ENCODE measurements at regions of chr6 and their contacts with region 1.

Region 1: GRCh38 chr6:152316024-152316423 is 321.1 kb downstream of the SYNE1 start:
- DNase-seq: no peak
- H3K4me3 ChIP-seq: no peak overlapping the region
- H3K27ac ChIP-seq: peak overlapping the region in 1 of 2 experiments; percentile 95; a peak in 3 of 4 replicates
- H3K4me1 ChIP-seq: peaks cover 0 to 19% of the 10 kb centered on the region in 2 experiments; a peak in 1 of 4 replicates
- H3K27me3 ChIP-seq: no peaks in the 10 kb centered on the region
- CTCF ChIP-seq: no peak
- EP300 ChIP-seq: no peak
- RAD21 ChIP-seq: no peak

Region 2: DNA sequence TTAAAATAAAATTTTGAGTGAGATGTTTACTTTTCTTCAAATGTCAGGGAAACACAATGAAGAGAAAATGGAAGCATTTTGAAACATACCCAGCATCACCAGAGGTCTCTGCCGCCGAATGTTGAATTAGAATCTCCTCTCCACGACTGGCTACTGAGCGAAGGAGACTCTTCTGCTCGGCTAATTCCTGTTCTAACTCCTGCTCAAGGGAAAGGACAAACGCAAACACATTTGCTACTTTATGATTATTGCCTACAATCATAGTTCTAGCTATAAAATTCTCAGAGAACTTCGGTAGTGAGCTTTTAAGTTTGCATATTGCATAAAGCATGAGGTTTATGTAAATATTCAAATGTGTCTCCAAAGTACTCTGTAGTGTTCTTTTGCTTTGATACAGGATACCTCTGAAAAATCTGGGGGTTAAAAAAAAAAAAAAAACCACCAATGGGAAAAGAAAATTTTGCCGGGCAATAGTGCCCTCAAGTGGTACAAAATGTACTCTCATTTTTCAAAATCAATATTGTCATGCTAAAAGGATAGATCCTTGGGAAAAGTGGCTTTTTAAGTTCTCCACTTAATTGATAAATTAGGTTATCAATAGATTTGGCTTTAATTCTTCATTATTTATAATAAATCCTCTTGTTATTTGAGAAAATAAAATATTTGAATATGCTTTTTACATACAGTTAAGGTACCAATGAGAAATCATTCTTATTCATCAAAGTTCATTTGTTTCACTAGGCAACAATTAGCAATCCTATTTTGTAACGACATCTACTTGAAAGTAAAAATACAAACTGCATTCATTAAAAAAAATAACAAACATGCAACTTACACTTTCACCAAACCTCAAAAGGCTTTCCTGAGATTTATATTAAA is 47.8 kb before region 1 on chr6:
- CTCF ChIA-PET with region 1: no interaction called
- POLR2A ChIA-PET with region 1: no interaction called
- DNase-seq: peak; percentile 43
- H3K4me3 ChIP-seq: peak overlapping the region in 1 of 2 experiments; percentile 44; a peak in 1 of 4 replicates
- H3K27ac ChIP-seq: no peak overlapping the region
- H3K4me1 ChIP-seq: peaks cover 0 to 13% of the 10 kb centered on the region in 2 experiments; a peak in 1 of 4 replicates
- H3K27me3 ChIP-seq: no peaks in the 10 kb centered on the region
- CTCF ChIP-seq: peak; percentile 72
- EP300 ChIP-seq: no peak
- RAD21 ChIP-seq: peak; percentile 77

Region 3: GRCh38 chr6:152301764-152302568 is 14.1 kb before region 1 on chr6:
- CTCF ChIA-PET with region 1: interaction called, 12 read pairs
- POLR2A ChIA-PET with region 1: no interaction called
- DNase-seq: peak; percentile 84
- H3K4me3 ChIP-seq: peak overlapping the region; percentile 72 to 79
- H3K27ac ChIP-seq: peak overlapping the region; percentile 81 to 97
- H3K4me1 ChIP-seq: peaks cover 3 to 11% of the 10 kb centered on the region in 2 experiments; a peak in 3 of 4 replicates
- H3K27me3 ChIP-seq: no peaks in the 10 kb centered on the region
- CTCF ChIP-seq: peak; percentile 56
- EP300 ChIP-seq: 0 out of 4 replicates have a peak, but pooled peaks of 1 of the 2 experiments have one; percentile 4
- RAD21 ChIP-seq: peak; percentile 46

Region 4: GRCh38 chr6:152329638-152330448 is 13.8 kb after region 1 on chr6:
- CTCF ChIA-PET with region 1: no interaction called
- POLR2A ChIA-PET with region 1: no interaction called
- DNase-seq: no peak
- H3K4me3 ChIP-seq: no peak overlapping the region
- H3K27ac ChIP-seq: no peak overlapping the region
- H3K4me1 ChIP-seq: no peaks in the 10 kb centered on the region
- H3K27me3 ChIP-seq: no peaks in the 10 kb centered on the region
- CTCF ChIP-seq: no peak
- EP300 ChIP-seq: no peak
- RAD21 ChIP-seq: no peak